Activated naive CD4-positive, alpha-beta T cell treated with anti-CD3 and anti-CD28 coated beads for 36 hours (primary cell): ENCODE measurements at regions of chr11 and their contacts with region 1.

Region 1: DNA sequence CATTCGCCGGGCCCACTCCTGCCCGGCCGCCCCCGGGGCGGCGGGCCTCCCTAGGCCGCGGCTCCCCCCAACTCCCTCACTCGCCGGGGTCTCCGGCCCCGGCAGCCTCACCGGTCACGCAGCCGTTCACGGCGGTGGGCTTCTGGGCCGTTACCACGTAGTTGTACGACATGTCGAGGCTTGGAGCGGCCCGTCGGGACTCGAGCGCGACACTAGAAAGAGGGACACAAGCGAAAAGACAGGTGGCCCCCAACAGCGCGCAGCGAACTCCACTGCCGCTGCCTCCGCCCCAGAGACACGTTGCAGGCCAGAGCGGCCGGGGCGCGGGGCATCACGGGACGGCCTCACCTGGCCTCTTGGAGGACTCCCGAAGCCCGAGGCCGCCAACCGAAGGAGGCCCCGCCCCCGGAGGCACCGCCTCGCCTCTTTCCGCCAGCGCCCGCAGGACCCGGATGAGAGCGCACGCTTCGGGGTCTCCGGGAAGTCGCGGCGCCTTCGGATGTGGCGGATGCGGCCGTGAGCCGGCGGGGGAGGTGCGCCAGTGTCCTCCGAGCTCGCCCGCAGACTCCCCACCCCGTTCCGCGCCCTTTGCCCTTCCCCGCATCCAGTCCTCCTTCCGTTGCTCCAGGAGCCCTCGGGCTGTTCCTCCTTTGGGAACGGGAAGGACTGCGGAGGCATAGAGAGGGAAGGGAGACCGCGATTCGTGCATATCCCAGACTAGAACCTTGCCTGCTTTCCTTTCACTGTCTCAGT is at the starts of genes DDB1 and TKFC:
- DNase-seq: peak; percentile 98
- H3K4me3 Mint-ChIP-seq: peak within 1 kb of the TSS; percentile 96
- H3K27ac Mint-ChIP-seq: peak within 1 kb of the TSS; percentile 94
- H3K4me1 Mint-ChIP-seq: peaks cover 73% of the 10 kb centered on the region
- H3K27me3 Mint-ChIP-seq: no peaks in the 10 kb centered on the region
- total RNA-seq, gene DDB1: 227 to 236 TPM
- total RNA-seq, gene TKFC: 146 to 154 TPM

Region 2: DNA sequence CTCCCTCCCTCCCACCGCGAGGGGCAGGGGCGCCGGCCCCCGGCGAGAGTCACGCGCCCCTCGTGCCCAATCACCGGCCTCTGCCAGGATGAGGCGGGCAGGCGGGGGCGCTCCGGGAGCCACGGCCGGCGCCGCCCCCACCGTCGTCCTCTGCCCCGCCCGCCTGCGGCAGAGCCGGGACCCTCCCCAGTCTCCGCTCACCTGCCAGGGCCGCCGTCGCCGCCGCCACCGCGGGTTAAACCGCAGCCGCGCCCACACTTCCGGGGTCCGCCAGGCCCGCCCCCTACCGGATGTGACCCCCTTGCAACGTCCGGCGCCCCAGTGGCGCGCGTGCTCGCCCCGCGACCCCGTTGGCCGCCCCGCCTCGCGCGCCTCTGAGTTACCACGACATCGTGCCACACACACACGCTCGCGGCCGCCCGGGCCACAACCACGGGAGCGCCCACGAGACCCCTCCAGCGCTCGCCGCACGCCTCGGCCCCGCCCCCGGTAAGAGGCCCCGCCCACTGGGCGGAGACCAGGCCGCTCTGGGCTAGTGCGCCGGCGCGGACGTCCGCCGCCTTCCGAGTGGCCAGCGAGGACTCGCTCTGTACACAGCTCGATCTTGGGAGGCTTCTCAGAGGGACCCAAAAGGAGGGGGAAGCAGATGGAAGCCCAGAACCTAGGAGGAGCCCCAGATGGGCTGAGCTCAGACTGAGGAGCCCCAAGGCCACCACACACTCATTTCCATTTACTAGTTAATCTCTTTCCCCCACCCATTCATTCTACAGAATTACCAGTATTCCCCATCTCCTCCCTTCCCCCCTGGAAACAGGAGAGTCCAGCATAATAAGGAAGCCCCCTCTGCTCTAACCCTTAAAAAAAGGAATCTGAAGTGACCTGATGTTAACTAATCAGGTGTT is 171.5 kb before region 1 on chr11 and contains the start of gene VPS37C:
- CTCF ChIA-PET with region 1: interaction called, 4 read pairs
- intact Hi-C with region 1: loop called (anchors 1 kb)
- DNase-seq: peak; percentile 91
- H3K4me3 Mint-ChIP-seq: peak within 1 kb of the TSS; percentile 94
- H3K27ac Mint-ChIP-seq: peak within 1 kb of the TSS; percentile 93
- H3K4me1 Mint-ChIP-seq: peaks cover 62% of the 10 kb centered on the region
- H3K27me3 Mint-ChIP-seq: no peaks in the 10 kb centered on the region
- total RNA-seq, gene VPS37C: 8.5 to 8.9 TPM

Region 3: GRCh38 chr11:61347916-61348461 is 15.0 kb after region 1 on chr11:
- CTCF ChIA-PET with region 1: interaction called, 49 read pairs
- intact Hi-C with region 1: no loop called
- DNase-seq: no peak
- H3K4me3 Mint-ChIP-seq: no peak overlapping the region
- H3K27ac Mint-ChIP-seq: no peak overlapping the region
- H3K4me1 Mint-ChIP-seq: no peaks in the 10 kb centered on the region
- H3K27me3 Mint-ChIP-seq: no peaks in the 10 kb centered on the region

Region 4: GRCh38 chr11:61377461-61378160 is 44.6 kb after region 1 on chr11:
- CTCF ChIA-PET with region 1: interaction called, 243 read pairs
- intact Hi-C with region 1: no loop called
- DNase-seq: no peak
- H3K4me3 Mint-ChIP-seq: no peak overlapping the region
- H3K27ac Mint-ChIP-seq: no peak overlapping the region
- H3K4me1 Mint-ChIP-seq: no peaks in the 10 kb centered on the region
- H3K27me3 Mint-ChIP-seq: no peaks in the 10 kb centered on the region

Region 5: GRCh38 chr11:61429691-61430582 is 97.0 kb after region 1 on chr11 and contains the starts of genes CPSF7 and SDHAF2:
- CTCF ChIA-PET with region 1: interaction called, 37 read pairs
- intact Hi-C with region 1: loop called (anchors 1 kb)
- DNase-seq: peak; percentile 98
- H3K4me3 Mint-ChIP-seq: peak within 1 kb of the TSS; percentile 98
- H3K27ac Mint-ChIP-seq: peak within 1 kb of the TSS; percentile 97
- H3K4me1 Mint-ChIP-seq: peaks cover 65% of the 10 kb centered on the region
- H3K27me3 Mint-ChIP-seq: no peaks in the 10 kb centered on the region
- total RNA-seq, gene CPSF7: 106 to 108 TPM
- total RNA-seq, gene SDHAF2: 23.7 to 27.0 TPM

Region 6: DNA sequence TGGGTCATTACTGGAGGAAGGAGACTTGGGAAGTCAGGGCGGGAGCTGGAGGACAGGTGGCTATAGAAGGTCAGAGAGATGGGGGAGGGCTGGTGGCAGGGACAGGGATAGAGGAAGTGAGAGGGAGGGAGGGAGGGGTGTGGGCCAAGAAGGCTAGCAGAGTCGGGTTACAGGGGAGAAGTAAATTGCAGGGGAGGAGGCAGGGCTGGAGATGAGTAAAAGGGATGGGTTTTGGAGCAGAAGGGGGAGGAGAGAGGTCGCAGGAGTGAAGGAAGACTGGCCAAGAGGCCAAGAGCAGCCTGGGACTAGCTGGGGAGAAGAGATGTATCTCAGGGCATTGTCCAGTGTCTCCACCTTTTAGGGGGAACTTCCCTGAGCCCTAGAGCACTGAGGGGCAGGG is 208.6 kb after region 1 on chr11:
- CTCF ChIA-PET with region 1: no interaction called
- intact Hi-C with region 1: no loop called
- DNase-seq: no peak
- H3K4me3 Mint-ChIP-seq: no peak overlapping the region
- H3K27ac Mint-ChIP-seq: no peak overlapping the region
- H3K4me1 Mint-ChIP-seq: no peaks in the 10 kb centered on the region
- H3K27me3 Mint-ChIP-seq: peaks cover 8% of the 10 kb centered on the region